Posterior vena cava (tissue), 2 donors: ENCODE measurements at regions of chr5 and their contacts with region 1.

Region 1: GRCh38 chr5:171614971-171615653 is 170.5 kb upstream of the SMIM23 start:
- DNase-seq: no peak

Region 2: GRCh38 chr5:172137041-172137440 is 521.9 kb after region 1 on chr5:
- intact Hi-C with region 1: loop called in 1 of 2 experiments (anchors 5 kb)
- DNase-seq: no peak